ENCODE measurements at regions of chr3 and their contacts with region 1.

Region 1: GRCh38 chr3:126752303-126752842 is 48.3 kb downstream of the CHCHD6 start:
- DNase-seq: peak; percentile 87
- H3K4me3 ChIP-seq: no peak overlapping the region
- H3K27ac ChIP-seq: peak overlapping the region; percentile 52; the same call in 1 of the 2 replicates
- H3K4me1 ChIP-seq: peaks cover 22% of the 10 kb centered on the region
- H3K27me3 ChIP-seq: no peaks in the 10 kb centered on the region

Region 2: GRCh38 chr3:126954141-126954842 is 201.9 kb after region 1 on chr3:
- in situ Hi-C with region 1: no loop called
- DNase-seq: peak; percentile 35
- H3K4me3 ChIP-seq: no peak overlapping the region
- H3K27ac ChIP-seq: no peak overlapping the region
- H3K4me1 ChIP-seq: no peaks in the 10 kb centered on the region
- H3K27me3 ChIP-seq: no peaks in the 10 kb centered on the region

Region 3: GRCh38 chr3:126979046-126979628 is 226.8 kb after region 1 on chr3:
- in situ Hi-C with region 1: loop called (anchors 5 kb)
- DNase-seq: no peak
- H3K4me3 ChIP-seq: no peak overlapping the region
- H3K27ac ChIP-seq: no peak overlapping the region
- H3K4me1 ChIP-seq: no peaks in the 10 kb centered on the region
- H3K27me3 ChIP-seq: no peaks in the 10 kb centered on the region

Region 4: GRCh38 chr3:127455541-127456450 is 703.4 kb after region 1 on chr3:
- in situ Hi-C with region 1: loop called (anchors 10 kb)
- DNase-seq: peak; percentile 79
- H3K4me3 ChIP-seq: peak overlapping the region; percentile 65
- H3K27ac ChIP-seq: no peak overlapping the region
- H3K4me1 ChIP-seq: peaks cover 13% of the 10 kb centered on the region
- H3K27me3 ChIP-seq: peaks cover 22% of the 10 kb centered on the region; the same call in 1 of the 2 replicates